Posterior vena cava (tissue), 2 donors: ENCODE measurements at regions of chr14 and their contacts with region 1.

Region 1: DNA sequence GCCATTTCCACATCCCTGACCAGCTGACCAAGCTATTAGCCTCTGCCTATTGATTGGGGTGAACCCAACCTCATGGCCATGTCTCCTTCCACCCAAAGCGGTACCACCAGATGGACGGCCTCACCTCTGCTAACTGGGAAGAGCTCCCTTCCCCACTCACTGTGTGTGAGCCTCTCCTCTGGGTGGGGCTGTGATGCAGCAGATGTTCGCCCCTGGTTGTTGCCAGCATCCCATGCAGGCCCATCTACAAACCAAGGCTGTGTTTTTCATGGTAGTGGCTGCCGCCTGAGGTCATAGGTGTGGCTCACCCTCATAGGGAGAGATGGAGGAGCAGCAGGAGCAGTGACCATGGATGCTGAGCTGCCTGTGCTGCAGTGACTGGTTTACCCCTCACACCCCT is 47.6 kb upstream of the RD3L start:
- DNase-seq: no peak

Region 2: GRCh38 chr14:103808403-103809001 is 181.5 kb before region 1 on chr14:
- intact Hi-C with region 1: loop called in 1 of 2 experiments (anchors 10 kb)
- DNase-seq: peak; percentile 84